ENCODE measurements at regions of chr17 and their contacts with region 1.

Region 1: GRCh38 chr17:38702166-38702899 is 2.7 kb upstream of the MLLT6 start:
- DNase-seq: peak; percentile 99
- H3K4me3 Mint-ChIP-seq: peak overlapping the region; percentile 85
- H3K27ac Mint-ChIP-seq: peak overlapping the region; percentile 90
- H3K4me1 Mint-ChIP-seq: peaks cover 37% of the 10 kb centered on the region
- H3K27me3 Mint-ChIP-seq: peaks cover 33% of the 10 kb centered on the region
- CTCF ChIP-seq: no peak

Region 2: GRCh38 chr17:38674749-38675615 is 27.4 kb before region 1 on chr17 and contains the start of gene EPOP:
- CTCF ChIA-PET with region 1: interaction called, 9 read pairs
- intact Hi-C with region 1: loop called (anchors 2 kb)
- DNase-seq: peak; percentile 100
- H3K4me3 Mint-ChIP-seq: peak within 1 kb of the TSS; percentile 66
- H3K27ac Mint-ChIP-seq: peak within 1 kb of the TSS; percentile 31
- H3K4me1 Mint-ChIP-seq: peaks cover 34% of the 10 kb centered on the region
- H3K27me3 Mint-ChIP-seq: peaks cover 72% of the 10 kb centered on the region
- CTCF ChIP-seq: no peak
- total RNA-seq, gene EPOP: 15.3 and 20.9 TPM in 2 replicates

Region 3: GRCh38 chr17:38729886-38730525 is 27.7 kb after region 1 on chr17 and contains the start of gene CISD3:
- CTCF ChIA-PET with region 1: interaction called, 38 read pairs
- intact Hi-C with region 1: loop called (anchors 1 kb)
- DNase-seq: peak; percentile 100
- H3K4me3 Mint-ChIP-seq: peak within 1 kb of the TSS; percentile 90
- H3K27ac Mint-ChIP-seq: peak within 1 kb of the TSS; percentile 85
- H3K4me1 Mint-ChIP-seq: peaks cover 48% of the 10 kb centered on the region
- H3K27me3 Mint-ChIP-seq: no peaks in the 10 kb centered on the region
- CTCF ChIP-seq: peak; percentile 100
- total RNA-seq, gene CISD3: 101 and 109 TPM in 2 replicates

Region 4: DNA sequence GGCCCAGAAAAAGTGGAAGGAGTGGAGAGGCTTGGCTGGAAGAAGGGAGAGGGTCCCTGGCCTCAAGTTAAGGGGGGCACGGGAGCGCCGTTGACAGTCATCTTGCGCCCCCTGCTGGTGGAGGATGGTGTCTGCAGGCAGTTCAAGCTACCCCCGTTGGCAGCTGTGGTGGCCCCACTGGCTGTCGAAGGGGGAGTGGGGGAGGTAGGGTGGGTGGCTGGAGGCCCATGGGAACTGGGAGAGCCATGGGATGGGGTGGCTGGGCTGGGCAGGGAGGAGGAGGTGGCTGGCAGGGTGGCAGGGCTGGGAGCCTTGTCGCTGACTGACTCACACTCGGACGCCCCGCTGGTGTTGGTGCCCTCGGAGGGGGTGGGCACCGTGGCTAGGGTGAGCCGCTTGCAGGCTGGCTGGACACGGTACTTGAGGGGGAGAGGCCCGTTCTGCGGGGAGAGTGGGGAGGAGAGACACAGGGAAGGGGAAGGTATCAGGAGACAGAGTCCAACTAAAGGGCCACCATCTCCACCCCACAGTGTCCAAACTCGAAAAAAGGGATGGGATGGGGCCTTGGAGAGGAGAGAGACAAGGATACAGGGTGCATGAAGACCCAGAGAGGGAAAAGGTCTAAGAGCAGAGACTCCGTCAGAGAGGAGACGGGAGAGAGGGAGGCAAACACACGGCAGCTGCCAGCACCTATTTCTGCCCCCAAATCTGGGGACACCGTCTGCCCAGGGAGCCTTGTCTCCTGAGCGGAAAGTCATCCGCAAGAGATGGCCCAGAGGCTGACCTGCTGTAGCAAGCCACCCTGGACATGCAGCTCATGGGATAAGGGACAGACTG is 33.0 kb after region 1 on chr17:
- CTCF ChIA-PET with region 1: interaction called, 38 read pairs
- intact Hi-C with region 1: loop called (anchors 1 kb)
- DNase-seq: peak; percentile 93
- H3K4me3 Mint-ChIP-seq: no peak overlapping the region
- H3K27ac Mint-ChIP-seq: peak overlapping the region; percentile 15
- H3K4me1 Mint-ChIP-seq: peaks cover 44% of the 10 kb centered on the region
- H3K27me3 Mint-ChIP-seq: no peaks in the 10 kb centered on the region
- CTCF ChIP-seq: peak; percentile 100

Region 5: DNA sequence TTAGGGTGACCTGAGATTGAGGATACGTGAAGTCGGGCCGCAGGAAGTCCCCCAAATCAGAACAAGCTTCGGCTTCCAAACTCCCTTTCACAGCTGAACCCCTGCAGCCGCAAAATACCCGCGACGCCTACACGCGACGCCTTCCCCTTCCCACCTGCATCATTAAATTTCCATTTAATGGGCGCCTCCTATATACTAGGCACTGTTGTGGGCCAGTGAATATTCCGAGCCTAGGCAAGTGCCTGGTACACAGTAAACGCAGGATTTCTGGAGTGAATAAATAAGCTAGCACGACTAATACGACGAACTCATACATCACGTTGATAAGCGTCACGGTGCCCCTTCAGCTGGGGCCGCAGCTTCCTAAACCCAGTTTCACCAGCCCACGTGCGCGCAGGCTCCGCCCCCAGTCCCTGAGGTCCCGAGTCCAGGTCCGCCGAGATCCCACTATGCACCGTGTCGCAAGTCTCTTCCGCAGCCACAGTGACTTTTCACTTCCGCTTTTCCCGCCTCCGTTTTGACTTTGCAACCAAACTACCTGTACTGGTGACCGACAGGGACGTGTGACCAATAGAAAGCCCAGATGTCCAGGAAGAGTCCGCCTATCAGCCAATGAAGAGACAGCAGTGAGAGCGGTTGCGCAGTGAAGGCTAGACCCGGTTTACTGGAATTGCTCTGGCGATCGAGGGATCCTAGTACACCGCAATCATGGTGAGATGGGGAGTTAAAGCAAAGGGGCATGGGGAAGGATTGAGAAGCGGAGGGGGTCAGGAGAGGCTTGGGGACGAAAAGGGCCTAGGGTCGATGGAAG is 50.0 kb after region 1 on chr17 and contains the start of gene PSMB3:
- CTCF ChIA-PET with region 1: interaction called, 4 read pairs
- intact Hi-C with region 1: loop called (anchors 1 kb)
- DNase-seq: peak; percentile 100
- H3K4me3 Mint-ChIP-seq: peak within 1 kb of the TSS; percentile 78
- H3K27ac Mint-ChIP-seq: peak within 1 kb of the TSS; percentile 85
- H3K4me1 Mint-ChIP-seq: peaks cover 28% of the 10 kb centered on the region
- H3K27me3 Mint-ChIP-seq: no peaks in the 10 kb centered on the region
- CTCF ChIP-seq: no peak
- total RNA-seq, gene PSMB3: 893 and 935 TPM in 2 replicates